Activated T-helper 1 cell treated with anti-CD3 and anti-CD28 coated beads, Interleukin-12 subunit alpha, Interleukin-12 subunit beta, Interleukin-2, Interleukin-4 antibody, amounts not matched to agents 30 ng/mL and 10 ng/mL and 1 ng/mL, durations not matched to agents 14 hours and 24 hours and 36 hours (primary cell): ENCODE measurements at regions of chr1 and their contacts with region 1.

Region 1: DNA sequence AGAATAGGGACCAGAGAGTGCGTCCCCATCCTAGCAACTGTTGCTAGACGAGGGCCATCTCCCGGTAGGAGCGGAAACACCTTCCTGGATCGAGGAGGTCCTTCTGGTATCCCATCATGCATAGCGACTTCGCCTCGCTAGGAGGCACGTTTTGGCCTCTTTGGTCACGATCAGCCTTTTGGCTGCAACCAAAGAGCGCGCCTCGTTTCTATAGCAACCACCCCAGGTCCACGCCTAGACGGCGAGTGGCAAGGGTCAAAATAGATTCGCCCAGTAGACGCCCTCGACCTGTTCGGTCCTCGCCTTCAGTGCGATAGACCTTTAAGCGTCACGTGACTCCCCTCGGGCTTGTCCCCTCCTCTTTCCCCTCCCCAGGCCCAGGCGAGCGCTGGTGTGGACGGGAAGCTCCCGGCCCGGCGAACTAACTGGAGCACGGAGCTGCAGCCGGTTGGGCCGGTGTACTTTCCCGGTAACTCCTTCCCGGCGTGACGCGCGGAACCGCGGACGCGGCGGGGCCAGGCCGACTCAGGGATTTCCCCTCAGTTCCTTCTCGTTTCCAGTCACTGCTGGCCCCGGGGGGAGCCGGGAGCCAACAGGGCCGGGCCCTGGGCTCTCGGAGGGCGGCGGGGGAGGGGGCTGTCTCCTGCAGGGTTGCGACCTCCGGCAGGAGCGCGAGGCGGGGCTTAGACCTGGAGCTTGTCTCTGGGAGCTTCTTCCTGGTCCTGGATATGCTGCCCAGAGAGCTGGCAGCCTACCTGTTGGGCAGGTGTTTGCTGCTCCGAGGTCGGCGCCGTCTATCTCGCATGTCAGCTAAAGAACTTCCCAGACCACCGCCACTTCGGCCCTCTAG is at the start of gene DNAJC16:
- DNase-seq: peak; percentile 98
- H3K4me3 Mint-ChIP-seq: peak within 1 kb of the TSS; percentile 83
- H3K27ac Mint-ChIP-seq: peak within 1 kb of the TSS; percentile 95
- H3K4me1 Mint-ChIP-seq: peaks cover 57% of the 10 kb centered on the region
- H3K27me3 Mint-ChIP-seq: no peaks in the 10 kb centered on the region
- total RNA-seq, gene DNAJC16: 18.8 and 19.8 TPM in 2 replicates

Region 2: GRCh38 chr1:15345711-15346355 is 180.9 kb before region 1 on chr1:
- intact Hi-C with region 1: loop called (anchors 5 kb)
- DNase-seq: peak; percentile 68
- H3K4me3 Mint-ChIP-seq: peak overlapping the region; percentile 38
- H3K27ac Mint-ChIP-seq: peak overlapping the region; percentile 85
- H3K4me1 Mint-ChIP-seq: peaks cover 68% of the 10 kb centered on the region
- H3K27me3 Mint-ChIP-seq: peaks cover 3% of the 10 kb centered on the region

Region 3: GRCh38 chr1:15584489-15585363 is 58.0 kb after region 1 on chr1 and contains the start of gene AGMAT:
- intact Hi-C with region 1: loop called (anchors 1 kb)
- DNase-seq: peak; percentile 43
- H3K4me3 Mint-ChIP-seq: peak within 1 kb of the TSS; percentile 89
- H3K27ac Mint-ChIP-seq: peak within 1 kb of the TSS; percentile 89
- H3K4me1 Mint-ChIP-seq: peaks cover 26% of the 10 kb centered on the region
- H3K27me3 Mint-ChIP-seq: no peaks in the 10 kb centered on the region
- total RNA-seq, gene AGMAT: 34.4 and 34.5 TPM in 2 replicates

Region 4: GRCh38 chr1:15684468-15685291 is 158.0 kb after region 1 on chr1:
- intact Hi-C with region 1: loop called (anchors 2 kb)
- DNase-seq: peak; percentile 18
- H3K4me3 Mint-ChIP-seq: peak overlapping the region; percentile 88
- H3K27ac Mint-ChIP-seq: peak overlapping the region; percentile 86
- H3K4me1 Mint-ChIP-seq: peaks cover 31% of the 10 kb centered on the region
- H3K27me3 Mint-ChIP-seq: peaks cover 2% of the 10 kb centered on the region

Region 5: GRCh38 chr1:16351994-16352841 is 825.5 kb after region 1 on chr1 and contains the start of gene FBXO42:
- intact Hi-C with region 1: loop called (anchors 2 kb)
- DNase-seq: peak; percentile 94
- H3K4me3 Mint-ChIP-seq: peak within 1 kb of the TSS; percentile 97
- H3K27ac Mint-ChIP-seq: peak within 1 kb of the TSS; percentile 88
- H3K4me1 Mint-ChIP-seq: peaks cover 29% of the 10 kb centered on the region
- H3K27me3 Mint-ChIP-seq: no peaks in the 10 kb centered on the region
- total RNA-seq, gene FBXO42: 17.1 and 19.1 TPM in 2 replicates

Region 6: GRCh38 chr1:17439250-17440073 is 1912.7 kb after region 1 on chr1 and contains the start of gene RCC2:
- intact Hi-C with region 1: loop called (anchors 10 kb)
- DNase-seq: peak; percentile 66
- H3K4me3 Mint-ChIP-seq: peak within 1 kb of the TSS; percentile 94
- H3K27ac Mint-ChIP-seq: peak within 1 kb of the TSS; percentile 98
- H3K4me1 Mint-ChIP-seq: peaks cover 40% of the 10 kb centered on the region
- H3K27me3 Mint-ChIP-seq: no peaks in the 10 kb centered on the region
- total RNA-seq, gene RCC2: 238 and 246 TPM in 2 replicates